ENCODE measurements at regions of chr19 and their contacts with region 1.

Region 1: DNA sequence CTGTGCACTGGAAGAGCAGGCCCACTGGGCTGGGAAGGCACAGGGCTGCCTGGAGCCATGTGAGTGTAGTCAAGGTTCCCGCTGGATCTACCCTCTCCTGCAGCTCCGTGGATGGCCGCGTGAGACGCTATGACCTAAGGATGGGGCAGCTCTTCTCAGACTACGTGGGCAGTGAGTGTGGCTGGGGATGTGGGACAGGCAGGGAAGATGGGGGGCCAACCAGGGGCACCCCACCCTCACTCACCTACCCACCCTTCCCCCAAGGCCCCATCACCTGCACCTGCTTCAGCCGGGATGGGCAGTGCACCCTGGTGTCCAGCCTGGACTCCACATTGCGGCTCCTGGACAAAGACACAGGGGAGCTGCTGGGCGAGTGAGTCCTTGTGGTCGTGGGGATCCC is 6.1 kb downstream of the WDR83 start:
- DNase-seq: no peak
- ATAC-seq: no peak
- H3K4me3 ChIP-seq: no peak overlapping the region
- H3K4me3 Mint-ChIP-seq: no peak overlapping the region
- H3K27ac ChIP-seq: no peak overlapping the region
- H3K27ac Mint-ChIP-seq: no peak overlapping the region
- H3K4me1 ChIP-seq: peaks cover 20 to 32% of the 10 kb centered on the region in 2 donors
- H3K4me1 Mint-ChIP-seq: peaks cover 40% of the 10 kb centered on the region
- H3K27me3 ChIP-seq: no peaks in the 10 kb centered on the region
- H3K27me3 Mint-ChIP-seq: no peaks in the 10 kb centered on the region
- CTCF ChIP-seq: no peak

Region 2: DNA sequence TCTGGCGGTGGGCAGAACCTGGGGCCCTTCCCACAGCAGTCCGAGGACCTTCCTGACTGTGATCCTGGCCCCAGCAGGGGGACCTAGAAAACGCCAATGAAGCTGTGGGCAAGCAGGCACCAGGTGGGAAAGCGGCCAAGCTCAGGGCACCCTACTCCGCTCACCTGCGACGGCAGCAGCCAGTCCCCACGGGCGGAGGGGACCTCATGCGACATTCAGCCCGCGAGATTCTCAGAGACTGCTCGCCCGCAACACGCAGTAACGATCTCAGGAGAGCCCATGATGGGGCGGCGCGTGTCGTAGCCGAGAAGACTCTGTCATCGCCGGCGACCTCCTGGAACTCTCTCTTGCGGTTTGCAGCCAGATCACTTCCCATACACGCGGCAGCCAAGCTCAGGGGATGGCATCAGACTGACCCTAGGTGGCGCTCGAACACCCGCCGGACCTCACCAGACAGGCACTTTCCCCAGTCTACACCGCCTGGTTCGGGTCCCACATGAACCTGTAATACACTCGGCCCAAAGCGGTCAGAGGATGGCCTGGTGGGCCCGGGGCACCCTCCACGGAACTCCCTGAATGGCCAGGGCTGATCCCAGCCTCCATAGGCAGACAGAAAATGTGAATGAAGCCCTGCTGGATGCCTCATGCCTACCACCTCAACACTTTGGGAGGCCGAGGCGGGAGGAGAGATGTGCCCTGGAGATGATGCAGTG is 32.7 kb before region 1 on chr19:
- CTCF ChIA-PET with region 1: interaction called, 21 read pairs
- POLR2A ChIA-PET with region 1: no interaction called
- intact Hi-C with region 1: loop called (anchors 1 kb)
- DNase-seq: peak; percentile 91
- ATAC-seq: peak; percentile 95
- H3K4me3 ChIP-seq: peak overlapping the region in 4 of 5 experiments; percentile 18 to 48 (median 36)
- H3K4me3 Mint-ChIP-seq: peak overlapping the region; percentile 82
- H3K27ac ChIP-seq: peak overlapping the region; percentile 22 to 60
- H3K27ac Mint-ChIP-seq: peak overlapping the region; percentile 78
- H3K4me1 ChIP-seq: peaks cover 8 to 12% of the 10 kb centered on the region in 2 donors
- H3K4me1 Mint-ChIP-seq: peaks cover 18% of the 10 kb centered on the region
- H3K27me3 ChIP-seq: no peaks in the 10 kb centered on the region
- H3K27me3 Mint-ChIP-seq: no peaks in the 10 kb centered on the region
- CTCF ChIP-seq: peak; percentile 89

Region 3: GRCh38 chr19:12749938-12750521 is 77.3 kb after region 1 on chr19:
- CTCF ChIA-PET with region 1: no interaction called
- POLR2A ChIA-PET with region 1: no interaction called
- intact Hi-C with region 1: no loop called
- DNase-seq: no peak
- ATAC-seq: no peak
- H3K4me3 ChIP-seq: no peak overlapping the region
- H3K4me3 Mint-ChIP-seq: no peak overlapping the region
- H3K27ac ChIP-seq: no peak overlapping the region
- H3K27ac Mint-ChIP-seq: no peak overlapping the region
- H3K4me1 ChIP-seq: peaks cover 5 to 7% of the 10 kb centered on the region in 2 donors
- H3K4me1 Mint-ChIP-seq: peaks cover 4% of the 10 kb centered on the region
- H3K27me3 ChIP-seq: peaks cover 0 to 14% (median 0%) of the 10 kb centered on the region in 4 experiments
- H3K27me3 Mint-ChIP-seq: peaks cover 24% of the 10 kb centered on the region
- CTCF ChIP-seq: no peak

Region 4: GRCh38 chr19:13314762-13315161 is 642.0 kb after region 1 on chr19:
- CTCF ChIA-PET with region 1: no interaction called
- POLR2A ChIA-PET with region 1: no interaction called
- intact Hi-C with region 1: no loop called
- DNase-seq: no peak
- ATAC-seq: no peak
- H3K4me3 ChIP-seq: no peak overlapping the region
- H3K4me3 Mint-ChIP-seq: no peak overlapping the region
- H3K27ac ChIP-seq: no peak overlapping the region
- H3K27ac Mint-ChIP-seq: no peak overlapping the region
- H3K4me1 ChIP-seq: no peaks in the 10 kb centered on the region
- H3K4me1 Mint-ChIP-seq: no peaks in the 10 kb centered on the region
- H3K27me3 ChIP-seq: peaks cover 0 to 6% (median 1%) of the 10 kb centered on the region in 4 experiments
- H3K27me3 Mint-ChIP-seq: peaks cover 39% of the 10 kb centered on the region
- CTCF ChIP-seq: no peak